H1 (cell line): ENCODE measurements at regions of chr2 and their contacts with region 1.

Region 1: GRCh38 chr2:74334931-74335333 is 8.3 kb downstream of the SLC4A5 start:
- DNase-seq: peak; percentile 51 to 90
- H3K4me3 ChIP-seq: no peak overlapping the region
- H3K27ac ChIP-seq: no peak overlapping the region
- H3K4me1 ChIP-seq: no peaks in the 10 kb centered on the region
- H3K27me3 ChIP-seq: no peaks in the 10 kb centered on the region
- CTCF ChIP-seq: peak; percentile 90 to 95 (median 95)
- EP300 ChIP-seq: no peak
- POLR2A ChIP-seq: no peak
- RAD21 ChIP-seq: peak; percentile 72 to 78

Region 2: GRCh38 chr2:74250189-74250631 is 84.7 kb before region 1 on chr2:
- CTCF ChIA-PET with region 1: interaction called, 40 read pairs
- POLR2A ChIA-PET with region 1: no interaction called
- DNase-seq: peak in 1 of 2 experiments; percentile 70
- H3K4me3 ChIP-seq: no peak overlapping the region
- H3K27ac ChIP-seq: no peak overlapping the region
- H3K4me1 ChIP-seq: no peaks in the 10 kb centered on the region
- H3K27me3 ChIP-seq: no peaks in the 10 kb centered on the region; a peak in 3 of 7 replicates
- CTCF ChIP-seq: peak; percentile 79 to 84 (median 79)
- EP300 ChIP-seq: no peak
- POLR2A ChIP-seq: no peak
- RAD21 ChIP-seq: peak; percentile 77 to 80

Region 3: GRCh38 chr2:74267068-74267467 is 67.9 kb before region 1 on chr2:
- CTCF ChIA-PET with region 1: interaction called, 10 read pairs
- POLR2A ChIA-PET with region 1: no interaction called
- DNase-seq: no peak
- H3K4me3 ChIP-seq: no peak overlapping the region
- H3K27ac ChIP-seq: no peak overlapping the region
- H3K4me1 ChIP-seq: no peaks in the 10 kb centered on the region
- H3K27me3 ChIP-seq: no peaks in the 10 kb centered on the region
- CTCF ChIP-seq: peak; percentile 38 to 62 (median 57); a peak in 3 of 4 replicates
- EP300 ChIP-seq: no peak
- POLR2A ChIP-seq: no peak
- RAD21 ChIP-seq: peak; percentile 59 to 60

Region 4: GRCh38 chr2:74290466-74291217 is 44.3 kb before region 1 on chr2:
- CTCF ChIA-PET with region 1: interaction called, 13 read pairs
- POLR2A ChIA-PET with region 1: no interaction called
- DNase-seq: no peak
- H3K4me3 ChIP-seq: no peak overlapping the region
- H3K27ac ChIP-seq: no peak overlapping the region
- H3K4me1 ChIP-seq: no peaks in the 10 kb centered on the region
- H3K27me3 ChIP-seq: no peaks in the 10 kb centered on the region
- CTCF ChIP-seq: no peak
- EP300 ChIP-seq: no peak
- POLR2A ChIP-seq: no peak
- RAD21 ChIP-seq: no peak

Region 5: GRCh38 chr2:74345272-74345943 is 10.5 kb after region 1 on chr2:
- CTCF ChIA-PET with region 1: interaction called, 65 read pairs
- POLR2A ChIA-PET with region 1: interaction called, 4 read pairs
- DNase-seq: no peak
- H3K4me3 ChIP-seq: no peak overlapping the region
- H3K27ac ChIP-seq: no peak overlapping the region
- H3K4me1 ChIP-seq: no peaks in the 10 kb centered on the region
- H3K27me3 ChIP-seq: no peaks in the 10 kb centered on the region
- CTCF ChIP-seq: no peak
- EP300 ChIP-seq: no peak
- POLR2A ChIP-seq: no peak
- RAD21 ChIP-seq: no peak

Region 6: DNA sequence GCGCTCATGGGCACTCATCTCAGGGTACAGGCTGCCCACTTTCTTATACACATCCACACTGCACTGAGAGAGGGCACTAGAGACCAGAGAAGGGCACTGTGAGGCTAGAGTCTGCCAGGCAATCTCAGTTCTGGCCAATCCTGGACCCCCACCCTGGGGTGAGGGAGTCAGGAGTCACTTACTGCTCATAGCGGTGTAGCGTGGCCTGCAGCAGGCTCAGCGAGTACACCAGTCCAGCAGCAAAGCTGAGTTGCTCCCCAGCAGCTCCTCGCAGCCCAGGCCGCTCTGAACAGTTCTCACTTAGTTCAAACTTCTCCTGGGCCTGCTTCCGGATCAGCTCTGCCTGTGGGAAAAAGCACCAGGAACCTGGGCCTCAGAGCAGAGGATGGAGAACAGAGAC is 32.9 kb after region 1 on chr2:
- CTCF ChIA-PET with region 1: interaction called, 33 read pairs
- POLR2A ChIA-PET with region 1: no interaction called
- DNase-seq: no peak
- H3K4me3 ChIP-seq: no peak overlapping the region
- H3K27ac ChIP-seq: no peak overlapping the region
- H3K4me1 ChIP-seq: no peaks in the 10 kb centered on the region
- H3K27me3 ChIP-seq: no peaks in the 10 kb centered on the region
- CTCF ChIP-seq: no peak
- EP300 ChIP-seq: no peak
- POLR2A ChIP-seq: no peak
- RAD21 ChIP-seq: no peak

Region 7: GRCh38 chr2:74399785-74400184 is 64.9 kb after region 1 on chr2:
- CTCF ChIA-PET with region 1: interaction called, 27 read pairs
- POLR2A ChIA-PET with region 1: no interaction called
- DNase-seq: no peak
- H3K4me3 ChIP-seq: no peak overlapping the region
- H3K27ac ChIP-seq: no peak overlapping the region
- H3K4me1 ChIP-seq: peaks cover 0 to 3% (median 0%) of the 10 kb centered on the region in 4 experiments; a peak in 1 of 7 replicates
- H3K27me3 ChIP-seq: no peaks in the 10 kb centered on the region
- CTCF ChIP-seq: peak in 2 of 3 experiments; percentile 51 to 61; a peak in 3 of 4 replicates
- EP300 ChIP-seq: no peak
- POLR2A ChIP-seq: no peak
- RAD21 ChIP-seq: peak; percentile 65 to 66